PC-9 (cell line): ENCODE measurements at regions of chr20 and their contacts with region 1.

Region 1: GRCh38 chr20:13105864-13106457 is 97.2 kb downstream of the SPTLC3 start:
- DNase-seq: no peak
- H3K4me3 ChIP-seq: no peak overlapping the region
- H3K27ac ChIP-seq: no peak overlapping the region
- H3K4me1 ChIP-seq: peaks cover 14% of the 10 kb centered on the region
- H3K27me3 ChIP-seq: no peaks in the 10 kb centered on the region
- CTCF ChIP-seq: peak; percentile 83

Region 2: GRCh38 chr20:12970372-12970821 is 135.6 kb before region 1 on chr20:
- CTCF ChIA-PET with region 1: no interaction called
- POLR2A ChIA-PET with region 1: no interaction called
- intact Hi-C with region 1: loop called (anchors 1 kb)
- DNase-seq: no peak
- H3K4me3 ChIP-seq: no peak overlapping the region
- H3K27ac ChIP-seq: no peak overlapping the region
- H3K4me1 ChIP-seq: no peaks in the 10 kb centered on the region
- H3K27me3 ChIP-seq: no peaks in the 10 kb centered on the region
- CTCF ChIP-seq: peak; percentile 63

Region 3: DNA sequence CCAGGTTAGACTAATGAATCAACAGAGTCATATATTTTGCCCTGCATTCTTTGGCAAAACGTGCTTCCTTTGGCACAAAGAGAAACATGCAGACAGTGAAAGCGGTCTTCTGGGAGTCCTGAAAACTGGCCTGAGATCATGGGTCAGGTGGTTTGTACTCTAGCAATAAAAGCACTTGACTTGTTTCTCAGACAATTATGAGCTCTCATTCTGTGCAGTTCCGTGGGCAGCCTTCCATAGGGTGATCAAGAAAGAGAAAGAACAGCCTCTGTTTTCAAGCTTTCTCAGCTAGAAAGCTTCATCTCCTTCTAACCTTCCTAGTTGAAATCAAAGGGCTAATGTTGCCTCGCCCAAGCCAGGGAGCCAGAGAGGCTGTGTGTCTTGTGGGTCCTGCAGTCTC is 52.4 kb after region 1 on chr20:
- CTCF ChIA-PET with region 1: no interaction called
- POLR2A ChIA-PET with region 1: interaction called, 11 read pairs
- intact Hi-C with region 1: no loop called
- DNase-seq: no peak
- H3K4me3 ChIP-seq: no peak overlapping the region
- H3K27ac ChIP-seq: no peak overlapping the region
- H3K4me1 ChIP-seq: no peaks in the 10 kb centered on the region
- H3K27me3 ChIP-seq: no peaks in the 10 kb centered on the region
- CTCF ChIP-seq: no peak